MCF 10A (cell line): ENCODE measurements at regions of chr7 and their contacts with region 1.

Region 1: GRCh38 chr7:142873281-142873787 is 12.2 kb downstream of the TRPV6 start:
- DNase-seq: no peak
- H3K4me3 Mint-ChIP-seq: no peak overlapping the region
- H3K27ac Mint-ChIP-seq: no peak overlapping the region
- H3K4me1 Mint-ChIP-seq: no peaks in the 10 kb centered on the region
- H3K27me3 Mint-ChIP-seq: peaks cover 29% of the 10 kb centered on the region
- CTCF ChIP-seq: peak; percentile 24

Region 2: DNA sequence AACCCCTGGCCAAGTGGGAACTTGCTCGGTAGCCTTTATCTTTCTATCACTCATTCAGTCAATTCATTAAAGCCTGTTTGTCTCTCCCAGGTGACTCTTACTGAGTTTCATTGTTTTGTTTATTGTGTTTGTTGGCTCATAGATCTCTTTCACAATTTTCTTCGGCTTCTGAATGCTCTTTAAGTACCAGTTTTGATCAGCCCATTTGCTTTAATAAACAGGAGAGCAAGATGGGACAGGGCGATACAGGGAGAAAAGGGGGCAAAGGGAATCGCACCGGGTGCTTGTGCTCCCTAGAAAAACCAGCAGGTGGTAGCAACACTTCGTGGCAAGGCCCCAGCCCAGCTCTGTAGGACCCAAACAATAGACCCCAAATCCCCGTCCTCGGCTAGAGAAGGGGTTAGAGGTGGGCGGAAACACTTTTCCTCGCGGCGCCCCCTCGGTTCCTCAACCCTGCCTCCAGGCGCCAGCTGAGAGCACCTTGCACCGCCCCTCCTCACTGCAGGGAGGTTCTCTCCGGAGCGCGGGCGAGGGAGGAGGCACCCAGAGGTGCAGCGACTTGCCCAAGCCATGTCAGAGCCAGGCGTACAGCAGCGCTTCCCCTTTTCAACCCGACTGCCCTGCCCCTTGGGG is 19.5 kb before region 1 on chr7:
- CTCF ChIA-PET with region 1: interaction called, 16 read pairs
- POLR2A ChIA-PET with region 1: interaction called, 3 read pairs
- intact Hi-C with region 1: no loop called
- DNase-seq: peak; percentile 76
- H3K4me3 Mint-ChIP-seq: peak overlapping the region; percentile 82
- H3K27ac Mint-ChIP-seq: peak overlapping the region; percentile 55
- H3K4me1 Mint-ChIP-seq: peaks cover 29% of the 10 kb centered on the region
- H3K27me3 Mint-ChIP-seq: peaks cover 51% of the 10 kb centered on the region
- CTCF ChIP-seq: peak; percentile 88

Region 3: GRCh38 chr7:142859829-142860228 is 13.5 kb before region 1 on chr7:
- CTCF ChIA-PET with region 1: interaction called, 86 read pairs
- POLR2A ChIA-PET with region 1: interaction called, 3 read pairs
- intact Hi-C with region 1: no loop called
- DNase-seq: peak; percentile 77
- H3K4me3 Mint-ChIP-seq: no peak overlapping the region
- H3K27ac Mint-ChIP-seq: no peak overlapping the region
- H3K4me1 Mint-ChIP-seq: peaks cover 26% of the 10 kb centered on the region
- H3K27me3 Mint-ChIP-seq: peaks cover 44% of the 10 kb centered on the region
- CTCF ChIP-seq: no peak

Region 4: DNA sequence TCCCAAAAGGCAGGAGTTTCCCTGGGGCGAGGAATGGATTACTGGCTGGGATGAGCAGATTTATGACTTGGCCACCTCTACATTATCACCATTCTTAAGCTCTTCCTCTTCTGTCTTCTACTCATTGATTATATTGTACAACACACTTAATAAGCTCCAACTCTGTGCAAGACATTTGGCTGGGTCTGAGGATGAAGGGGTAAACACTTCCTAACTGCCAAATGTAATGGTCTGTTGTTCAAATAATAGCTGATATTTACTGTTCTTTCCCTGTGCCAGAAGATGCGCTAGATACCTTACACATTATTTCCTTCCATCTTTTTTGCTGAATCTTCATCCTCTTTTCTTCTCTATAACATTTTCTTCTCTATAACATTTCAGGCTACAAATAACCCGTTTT is 190.4 kb after region 1 on chr7:
- CTCF ChIA-PET with region 1: no interaction called
- POLR2A ChIA-PET with region 1: no interaction called
- intact Hi-C with region 1: no loop called
- DNase-seq: no peak
- H3K4me3 Mint-ChIP-seq: no peak overlapping the region
- H3K27ac Mint-ChIP-seq: no peak overlapping the region
- H3K4me1 Mint-ChIP-seq: no peaks in the 10 kb centered on the region
- H3K27me3 Mint-ChIP-seq: no peaks in the 10 kb centered on the region
- CTCF ChIP-seq: no peak